MCF 10A (cell line): ENCODE measurements at regions of chr9 and their contacts with region 1.

Region 1: GRCh38 chr9:122159026-122159924 is at the starts of genes MORN5 and NDUFA8:
- DNase-seq: peak; percentile 95
- H3K4me3 Mint-ChIP-seq: peak within 1 kb of the TSS; percentile 100
- H3K27ac Mint-ChIP-seq: peak within 1 kb of the TSS; percentile 96
- H3K4me1 Mint-ChIP-seq: peaks cover 34% of the 10 kb centered on the region
- H3K27me3 Mint-ChIP-seq: peaks cover 15% of the 10 kb centered on the region
- CTCF ChIP-seq: no peak
- total RNA-seq, gene MORN5: not detected in 2 replicates
- total RNA-seq, gene NDUFA8: 52.5 and 58.4 TPM in 2 replicates

Region 2: GRCh38 chr9:121744002-121744686 is 415.1 kb before region 1 on chr9:
- CTCF ChIA-PET with region 1: no interaction called
- POLR2A ChIA-PET with region 1: no interaction called
- intact Hi-C with region 1: no loop called
- DNase-seq: peak; percentile 40
- H3K4me3 Mint-ChIP-seq: no peak overlapping the region
- H3K27ac Mint-ChIP-seq: no peak overlapping the region
- H3K4me1 Mint-ChIP-seq: peaks cover 14% of the 10 kb centered on the region
- H3K27me3 Mint-ChIP-seq: no peaks in the 10 kb centered on the region
- CTCF ChIP-seq: no peak

Region 3: GRCh38 chr9:122248448-122248915 is 89.2 kb after region 1 on chr9:
- CTCF ChIA-PET with region 1: no interaction called
- POLR2A ChIA-PET with region 1: interaction called, 13 read pairs
- intact Hi-C with region 1: no loop called
- DNase-seq: peak; percentile 91
- H3K4me3 Mint-ChIP-seq: peak overlapping the region; percentile 62
- H3K27ac Mint-ChIP-seq: peak overlapping the region; percentile 91
- H3K4me1 Mint-ChIP-seq: peaks cover 19% of the 10 kb centered on the region
- H3K27me3 Mint-ChIP-seq: no peaks in the 10 kb centered on the region
- CTCF ChIP-seq: no peak